ENCODE measurements at regions of chr6 and their contacts with region 1.

Region 1: GRCh38 chr6:89035252-89036106 is 45.1 kb upstream of the PNRC1 start:
- DNase-seq: peak; percentile 89

Region 2: DNA sequence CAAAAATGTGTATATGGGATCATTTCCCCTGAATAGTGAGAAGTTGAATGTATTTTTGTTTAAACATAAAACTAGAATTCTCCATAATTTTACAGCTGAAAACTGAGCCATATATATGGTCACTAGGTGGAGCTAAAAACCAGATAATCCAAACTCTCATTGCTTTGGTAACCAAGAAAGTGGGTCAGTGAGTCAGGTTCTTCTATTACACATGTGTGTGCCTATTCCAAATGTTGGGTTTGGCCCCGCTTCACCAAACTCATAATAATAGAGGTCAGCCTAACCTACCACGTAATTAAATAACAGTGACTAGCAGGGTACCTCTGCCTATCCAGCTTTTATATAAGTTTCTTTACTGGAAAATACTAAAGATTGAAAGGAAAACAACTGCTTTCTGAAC is 52.8 kb before region 1 on chr6:
- intact Hi-C with region 1: loop called (anchors 5 kb)
- DNase-seq: no peak

Region 3: GRCh38 chr6:89022798-89023197 is 12.7 kb before region 1 on chr6:
- intact Hi-C with region 1: loop called (anchors 1 kb)
- DNase-seq: no peak

Measured in cardiac septum (tissue), 1 donor.